ENCODE measurements at regions of chr2 and their contacts with region 1.

Region 1: GRCh38 chr2:101151141-101151858 is at the start of gene TBC1D8:
- DNase-seq: peak; percentile 91
- CTCF ChIP-seq: no peak

Region 2: GRCh38 chr2:100610381-100610831 is 540.9 kb before region 1 on chr2:
- CTCF ChIA-PET with region 1: interaction called, 14 read pairs
- POLR2A ChIA-PET with region 1: no interaction called
- DNase-seq: peak; percentile 68
- CTCF ChIP-seq: peak; percentile 67

Region 3: GRCh38 chr2:101012706-101013181 is 138.6 kb before region 1 on chr2:
- CTCF ChIA-PET with region 1: interaction called, 32 read pairs
- POLR2A ChIA-PET with region 1: no interaction called
- DNase-seq: no peak
- CTCF ChIP-seq: peak; percentile 63

Region 4: GRCh38 chr2:101030863-101031554 is 120.3 kb before region 1 on chr2:
- CTCF ChIA-PET with region 1: interaction called, 60 read pairs
- POLR2A ChIA-PET with region 1: no interaction called
- DNase-seq: no peak
- CTCF ChIP-seq: no peak

Region 5: GRCh38 chr2:101036562-101037457 is 114.5 kb before region 1 on chr2:
- CTCF ChIA-PET with region 1: interaction called, 60 read pairs
- POLR2A ChIA-PET with region 1: no interaction called
- DNase-seq: peak; percentile 51
- CTCF ChIP-seq: peak; percentile 48

Region 6: DNA sequence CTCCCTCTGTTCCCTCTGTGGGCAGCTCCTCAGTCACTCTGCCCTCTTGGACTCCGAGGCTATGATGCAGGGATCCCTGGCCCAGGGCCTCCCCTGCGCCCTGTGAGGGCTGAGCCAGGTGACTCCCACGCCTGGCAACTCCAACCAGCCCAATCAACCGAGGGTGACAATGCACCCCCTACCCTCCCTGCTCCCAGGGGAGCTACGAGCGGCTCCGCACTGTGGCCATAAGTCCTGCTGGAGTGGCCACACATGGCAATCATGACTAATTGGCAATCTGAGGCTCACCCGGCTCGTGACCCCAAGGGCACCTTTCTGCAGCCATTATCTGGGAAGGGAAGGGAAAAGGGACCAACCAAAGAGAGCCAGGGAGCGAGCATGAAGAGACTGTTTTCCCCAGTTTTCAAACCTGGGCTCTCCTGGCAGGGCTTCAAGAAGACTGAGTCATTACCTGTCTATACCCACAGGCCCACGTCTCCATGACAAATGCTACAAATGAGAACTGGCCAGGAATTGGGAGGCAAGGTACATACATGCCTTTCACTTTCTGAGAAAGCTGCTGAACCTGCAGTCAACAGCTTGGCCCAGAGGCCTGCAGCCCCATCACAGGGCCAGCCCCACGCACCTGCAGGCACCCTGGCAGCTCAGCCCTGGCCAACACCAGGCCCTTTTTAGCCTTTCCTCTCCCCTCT is 104.1 kb before region 1 on chr2:
- CTCF ChIA-PET with region 1: interaction called, 10 read pairs
- POLR2A ChIA-PET with region 1: no interaction called
- DNase-seq: no peak
- CTCF ChIP-seq: no peak

Region 7: DNA sequence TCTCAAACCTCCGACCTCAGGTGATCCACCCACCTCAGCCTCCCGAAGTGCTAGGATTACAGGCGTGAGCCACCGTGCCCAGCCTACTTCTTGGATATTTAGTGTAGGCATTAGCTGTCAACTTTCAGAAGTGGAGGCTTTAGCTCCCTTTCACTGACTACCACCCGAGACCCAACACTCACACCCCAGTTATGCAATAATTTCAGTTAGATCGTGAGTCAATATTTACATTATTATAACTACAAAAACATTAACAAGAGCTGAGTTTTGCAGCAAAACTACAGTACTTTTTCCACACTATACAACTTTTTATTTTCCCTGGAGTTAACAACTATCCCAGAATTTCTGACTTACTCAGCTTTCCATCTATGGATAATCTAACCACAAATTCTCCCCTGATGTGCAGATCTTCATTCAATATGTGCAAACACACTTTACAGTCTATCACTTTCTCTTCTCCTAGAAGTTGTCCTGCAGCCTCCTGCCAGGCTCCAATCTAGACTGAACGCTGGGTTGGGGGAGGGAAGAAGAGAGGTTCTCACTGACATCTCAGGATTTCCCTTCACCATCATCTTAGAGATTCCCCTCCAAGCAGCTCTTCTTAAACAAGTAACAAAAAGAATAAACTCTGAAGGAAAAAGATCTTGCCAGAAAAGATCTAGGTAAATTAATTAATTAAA is 10.2 kb before region 1 on chr2:
- CTCF ChIA-PET with region 1: interaction called, 26 read pairs
- POLR2A ChIA-PET with region 1: no interaction called
- DNase-seq: no peak
- CTCF ChIP-seq: no peak

Region 8: GRCh38 chr2:101277113-101277512 is 125.8 kb after region 1 on chr2:
- CTCF ChIA-PET with region 1: no interaction called
- POLR2A ChIA-PET with region 1: no interaction called
- DNase-seq: no peak
- CTCF ChIP-seq: no peak

Measured in GM10248 (cell line).